HEK293 (cell line): ENCODE measurements at regions of chr10 and their contacts with region 1.

Region 1: GRCh38 chr10:109978481-109978880 is 29.3 kb upstream of the ADD3 start:
- H3K4me3 ChIP-seq: no peak overlapping the region
- H3K27ac ChIP-seq: no peak overlapping the region; the same call in 1 of the 2 replicates
- H3K4me1 ChIP-seq: peaks cover 20% of the 10 kb centered on the region; the same call in 1 of the 2 replicates
- CTCF ChIP-seq: no peak

Region 2: GRCh38 chr10:109956454-109957091 is 21.9 kb before region 1 on chr10:
- CTCF ChIA-PET with region 1: interaction called, 17 read pairs
- POLR2A ChIA-PET with region 1: interaction called, 4 read pairs
- H3K4me3 ChIP-seq: no peak overlapping the region
- H3K27ac ChIP-seq: no peak overlapping the region
- H3K4me1 ChIP-seq: peaks cover 10% of the 10 kb centered on the region
- CTCF ChIP-seq: no peak

Region 3: DNA sequence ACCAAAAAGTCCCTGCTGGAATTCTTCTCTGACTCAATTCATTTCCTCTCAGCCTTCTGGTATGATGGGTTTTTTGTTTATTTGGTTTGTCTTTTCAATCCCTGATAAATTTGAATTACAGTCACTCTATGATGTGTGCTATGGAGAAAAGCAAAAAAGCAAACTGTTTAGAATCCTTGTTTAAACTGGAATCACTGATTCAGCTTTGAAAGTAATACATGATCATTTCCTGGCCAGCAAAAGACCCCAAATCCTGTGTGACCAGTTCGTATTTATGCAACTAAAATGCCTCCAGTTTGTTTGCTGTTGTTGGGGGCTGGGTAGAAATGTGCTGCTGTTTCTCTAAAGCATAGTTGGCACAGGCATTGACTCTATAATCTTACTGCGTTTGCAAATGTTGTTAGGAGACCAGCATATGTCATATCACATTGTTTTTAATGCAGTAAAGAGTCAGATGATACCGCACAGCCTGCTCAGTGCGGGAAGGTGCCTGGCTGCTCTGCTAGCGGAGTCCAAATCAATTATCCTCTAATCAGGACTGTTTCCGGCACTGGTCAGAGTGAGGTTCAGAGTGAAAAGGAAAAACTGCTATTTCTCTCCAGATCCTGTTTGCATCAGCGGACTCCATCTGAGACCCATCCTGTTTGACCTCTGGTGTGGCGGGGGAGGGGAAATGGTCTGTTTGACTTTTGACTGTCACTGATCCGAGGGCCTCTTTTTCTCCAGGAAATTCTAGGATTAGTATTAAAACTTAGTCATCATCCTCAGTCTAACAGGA is 11.3 kb before region 1 on chr10:
- CTCF ChIA-PET with region 1: interaction called, 17 read pairs
- POLR2A ChIA-PET with region 1: no interaction called
- H3K4me3 ChIP-seq: no peak overlapping the region
- H3K27ac ChIP-seq: peak overlapping the region; percentile 13; the same call in 1 of the 2 replicates
- H3K4me1 ChIP-seq: peaks cover 20% of the 10 kb centered on the region
- CTCF ChIP-seq: no peak

Region 4: GRCh38 chr10:109998513-109998912 is 20.0 kb after region 1 on chr10:
- CTCF ChIA-PET with region 1: interaction called, 18 read pairs
- POLR2A ChIA-PET with region 1: no interaction called
- H3K4me3 ChIP-seq: no peak overlapping the region
- H3K27ac ChIP-seq: no peak overlapping the region; the same call in 1 of the 2 replicates
- H3K4me1 ChIP-seq: peaks cover 32% of the 10 kb centered on the region
- CTCF ChIP-seq: no peak